ENCODE measurements at regions of chr4 and their contacts with region 1.

Region 1: DNA sequence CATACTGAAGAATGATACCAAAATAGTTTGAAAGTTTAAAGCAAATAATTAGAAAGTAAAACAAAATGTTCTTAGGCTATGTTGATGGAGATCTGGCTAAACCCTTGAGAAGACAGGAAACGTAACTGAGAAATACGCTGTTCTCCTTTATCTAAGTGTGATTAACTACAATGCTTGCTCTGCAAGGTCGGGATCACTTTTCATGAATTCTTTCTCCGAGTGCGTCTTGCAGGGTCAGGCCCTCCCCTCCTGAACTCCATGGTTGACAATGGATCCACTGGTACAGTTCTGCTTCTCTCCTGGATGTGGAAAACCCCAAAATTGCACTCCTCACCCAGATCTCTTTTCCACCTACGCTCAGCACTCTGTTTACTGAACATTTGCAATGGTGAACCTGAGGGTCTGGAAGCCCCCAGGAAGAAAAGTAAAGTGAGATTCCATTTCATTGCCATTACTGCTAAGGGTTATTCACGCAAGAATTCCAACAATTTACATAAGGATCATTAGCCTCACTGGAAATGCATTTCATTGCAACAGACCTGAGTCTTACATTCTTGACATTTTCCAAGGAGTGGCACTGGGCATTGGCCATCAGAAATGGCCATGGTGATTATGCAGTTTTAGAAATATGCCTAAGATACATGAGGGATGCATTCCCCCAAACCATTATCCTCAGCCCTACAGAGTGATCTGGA is 24.6 kb upstream of the WWC2 start:
- DNase-seq: no peak
- H3K4me3 ChIP-seq: no peak overlapping the region
- H3K4me3 Mint-ChIP-seq: no peak overlapping the region
- H3K27ac ChIP-seq: no peak overlapping the region
- H3K27ac Mint-ChIP-seq: no peak overlapping the region
- H3K4me1 ChIP-seq: no peaks in the 10 kb centered on the region
- H3K4me1 Mint-ChIP-seq: peaks cover 0 to 4% (median 0%) of the 10 kb centered on the region in 3 donors
- H3K27me3 ChIP-seq: no peaks in the 10 kb centered on the region
- H3K27me3 Mint-ChIP-seq: peaks cover 8 to 15% of the 10 kb centered on the region in 2 donors

Region 2: GRCh38 chr4:183035726-183036415 is 38.6 kb before region 1 on chr4:
- CTCF ChIA-PET with region 1: no interaction called
- POLR2A ChIA-PET with region 1: no interaction called
- DNase-seq: no peak
- H3K4me3 ChIP-seq: no peak overlapping the region
- H3K4me3 Mint-ChIP-seq: no peak overlapping the region
- H3K27ac ChIP-seq: no peak overlapping the region
- H3K27ac Mint-ChIP-seq: no peak overlapping the region
- H3K4me1 ChIP-seq: no peaks in the 10 kb centered on the region
- H3K4me1 Mint-ChIP-seq: no peaks in the 10 kb centered on the region
- H3K27me3 ChIP-seq: no peaks in the 10 kb centered on the region
- H3K27me3 Mint-ChIP-seq: peaks cover 10 to 12% of the 10 kb centered on the region in 2 donors

Region 3: DNA sequence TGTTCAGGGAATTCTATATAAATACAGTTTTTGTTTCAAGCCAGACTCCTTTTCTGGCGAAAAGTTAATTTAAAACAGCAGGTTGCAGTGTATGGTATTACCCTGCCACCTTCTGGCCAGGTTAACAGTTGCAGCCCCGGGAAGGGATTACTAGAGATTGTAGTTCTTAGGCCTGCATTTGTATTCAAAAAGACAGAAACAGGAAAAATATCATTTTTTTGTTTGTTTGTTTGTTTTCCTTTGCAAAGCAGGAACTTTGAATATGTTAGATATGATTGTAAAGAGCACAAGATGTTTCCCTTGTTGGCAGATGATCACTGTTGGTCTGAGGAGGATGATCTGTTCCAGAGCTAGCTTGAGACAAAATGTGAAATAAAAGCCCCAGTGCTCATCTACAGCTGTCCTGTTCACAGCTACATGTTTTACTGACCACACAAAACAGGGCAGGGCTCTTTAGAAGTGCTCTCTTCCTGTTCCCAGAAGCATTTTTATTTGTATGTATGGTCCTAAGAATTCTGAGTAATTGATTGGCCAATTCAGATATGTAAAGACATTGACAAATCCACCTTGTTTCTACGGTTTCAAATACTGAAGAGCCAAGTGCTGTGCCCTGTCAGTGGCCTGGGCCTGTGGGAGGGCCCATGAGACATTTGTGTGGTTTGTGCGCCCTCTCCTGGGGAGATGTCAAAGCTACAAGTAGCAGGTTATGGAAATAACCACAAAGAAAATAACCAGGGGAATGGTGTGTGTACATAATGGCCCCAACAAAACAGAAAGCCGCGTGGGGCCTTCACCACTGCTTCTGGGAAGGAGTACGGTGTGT is 187.7 kb after region 1 on chr4:
- CTCF ChIA-PET with region 1: interaction called, 16 read pairs
- POLR2A ChIA-PET with region 1: no interaction called
- DNase-seq: peak; percentile 33 to 65 (median 53)
- H3K4me3 ChIP-seq: no peak overlapping the region
- H3K4me3 Mint-ChIP-seq: no peak overlapping the region
- H3K27ac ChIP-seq: no peak overlapping the region
- H3K27ac Mint-ChIP-seq: peak overlapping the region in 6 of 8 donors; percentile 45 to 87 (median 76)
- H3K4me1 ChIP-seq: peaks cover 5% of the 10 kb centered on the region
- H3K4me1 Mint-ChIP-seq: peaks cover 5 to 7% (median 6%) of the 10 kb centered on the region in 3 donors
- H3K27me3 ChIP-seq: no peaks in the 10 kb centered on the region
- H3K27me3 Mint-ChIP-seq: peaks cover 5 to 35% of the 10 kb centered on the region in 2 donors

Region 4: DNA sequence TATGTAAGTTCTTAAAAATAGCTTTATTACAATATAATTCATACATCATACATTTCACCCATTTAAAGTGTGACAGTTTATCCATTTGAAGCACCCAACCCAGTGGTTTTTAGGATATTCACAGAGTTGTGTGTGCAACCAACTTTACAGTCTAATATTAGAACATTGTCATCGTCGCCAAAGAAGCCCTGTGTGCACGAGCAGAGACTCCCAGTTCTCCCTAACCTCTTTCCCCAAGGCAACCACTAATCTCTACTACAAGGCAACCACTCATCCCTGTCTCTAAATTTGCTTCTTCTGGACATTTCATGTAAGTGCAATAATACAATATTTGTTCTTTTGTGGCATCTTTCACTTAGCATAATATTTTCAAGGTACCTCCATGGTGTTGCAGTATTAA is 197.9 kb after region 1 on chr4:
- CTCF ChIA-PET with region 1: no interaction called
- POLR2A ChIA-PET with region 1: no interaction called
- DNase-seq: no peak
- H3K4me3 ChIP-seq: no peak overlapping the region
- H3K4me3 Mint-ChIP-seq: no peak overlapping the region
- H3K27ac ChIP-seq: no peak overlapping the region
- H3K27ac Mint-ChIP-seq: no peak overlapping the region
- H3K4me1 ChIP-seq: no peaks in the 10 kb centered on the region
- H3K4me1 Mint-ChIP-seq: no peaks in the 10 kb centered on the region
- H3K27me3 ChIP-seq: no peaks in the 10 kb centered on the region
- H3K27me3 Mint-ChIP-seq: peaks cover 0 to 3% of the 10 kb centered on the region in 2 donors

Region 5: GRCh38 chr4:183407128-183407585 is 332.7 kb after region 1 on chr4:
- CTCF ChIA-PET with region 1: interaction called, 10 read pairs
- POLR2A ChIA-PET with region 1: no interaction called
- DNase-seq: peak; percentile 84 to 94 (median 86)
- H3K4me3 ChIP-seq: peak overlapping the region; percentile 71
- H3K4me3 Mint-ChIP-seq: peak overlapping the region; percentile 77 to 94 (median 84)
- H3K27ac ChIP-seq: peak overlapping the region; percentile 64
- H3K27ac Mint-ChIP-seq: peak overlapping the region; percentile 67 to 97 (median 88)
- H3K4me1 ChIP-seq: peaks cover 9% of the 10 kb centered on the region
- H3K4me1 Mint-ChIP-seq: peaks cover 10 to 16% (median 15%) of the 10 kb centered on the region in 3 donors
- H3K27me3 ChIP-seq: no peaks in the 10 kb centered on the region
- H3K27me3 Mint-ChIP-seq: no peaks in the 10 kb centered on the region

Measured in CD8-positive, alpha-beta memory T cell (primary cell).